CD14-positive monocyte (primary cell): ENCODE measurements at regions of chr7 and their contacts with region 1.

Region 1: DNA sequence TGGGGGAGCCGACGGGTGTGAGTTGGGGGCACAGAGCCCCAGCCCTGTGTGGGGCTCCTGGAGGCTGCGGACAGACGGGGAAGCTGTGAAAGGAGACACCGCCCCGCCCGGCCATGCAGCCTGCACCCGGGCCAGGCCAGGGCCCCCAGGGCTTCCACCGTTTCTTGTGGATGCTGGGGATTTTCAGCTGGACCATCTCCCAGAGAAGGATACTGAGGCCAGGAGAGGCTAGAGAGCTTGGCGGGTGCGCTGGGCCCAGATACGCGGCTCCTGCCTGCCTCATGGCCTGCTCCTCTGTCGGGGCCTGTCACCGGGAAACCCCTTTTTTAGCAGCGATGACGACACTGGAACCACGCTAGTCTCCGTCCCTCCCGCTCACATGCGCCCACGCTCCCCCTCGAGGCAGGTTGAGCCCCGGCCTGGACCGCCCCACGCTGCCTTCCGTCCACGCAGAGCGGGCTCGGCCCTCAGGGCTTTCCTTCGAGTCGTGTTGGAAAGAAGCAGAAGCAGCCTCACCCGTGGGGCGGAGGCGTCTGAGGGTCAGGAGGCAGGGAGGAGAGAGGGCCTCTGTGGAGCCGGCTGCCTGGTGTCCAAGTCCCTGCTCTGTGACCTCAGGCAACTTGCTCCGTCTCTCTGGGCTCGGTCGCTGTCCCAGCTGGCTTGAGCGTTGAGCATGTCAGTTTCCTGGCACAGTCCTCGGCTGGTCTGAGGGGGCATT is 11.7 kb downstream of the TMEM184A start:
- DNase-seq: peak in 1 of 3 donors; percentile 37
- H3K4me3 ChIP-seq: no peak overlapping the region
- H3K4me3 Mint-ChIP-seq: no peak overlapping the region
- H3K27ac ChIP-seq: peak overlapping the region in 1 of 2 donors; percentile 45
- H3K27ac Mint-ChIP-seq: peak overlapping the region in 4 of 7 donors; percentile 26 to 66 (median 53)
- H3K4me1 ChIP-seq: no peaks in the 10 kb centered on the region
- H3K4me1 Mint-ChIP-seq: peaks cover 4% of the 10 kb centered on the region
- H3K27me3 ChIP-seq: no peaks in the 10 kb centered on the region
- H3K27me3 Mint-ChIP-seq: no peaks in the 10 kb centered on the region
- CTCF ChIP-seq: no peak

Region 2: GRCh38 chr7:1503816-1504775 is 40.2 kb before region 1 on chr7 and contains the start of gene INTS1:
- intact Hi-C with region 1: loop called in 1 of 2 experiments (anchors 5 kb)
- DNase-seq: peak; percentile 90 to 91 (median 91)
- H3K4me3 ChIP-seq: peak within 1 kb of the TSS; percentile 64 to 94 (median 83)
- H3K4me3 Mint-ChIP-seq: peak within 1 kb of the TSS; percentile 94
- H3K27ac ChIP-seq: peak within 1 kb of the TSS in 1 of 2 donors; percentile 80
- H3K27ac Mint-ChIP-seq: peak within 1 kb of the TSS in 6 of 7 donors; percentile 45 to 91 (median 82)
- H3K4me1 ChIP-seq: peaks cover 29 to 43% of the 10 kb centered on the region in 2 donors
- H3K4me1 Mint-ChIP-seq: peaks cover 33% of the 10 kb centered on the region
- H3K27me3 ChIP-seq: no peaks in the 10 kb centered on the region
- H3K27me3 Mint-ChIP-seq: peaks cover 2 to 8% (median 3%) of the 10 kb centered on the region in 3 donors
- CTCF ChIP-seq: peak; percentile 92
- polyA plus RNA-seq, gene INTS1: 5.5 to 64.3 (median 7.3) TPM